ENCODE measurements at regions of chr19 and their contacts with region 1.

Region 1: DNA sequence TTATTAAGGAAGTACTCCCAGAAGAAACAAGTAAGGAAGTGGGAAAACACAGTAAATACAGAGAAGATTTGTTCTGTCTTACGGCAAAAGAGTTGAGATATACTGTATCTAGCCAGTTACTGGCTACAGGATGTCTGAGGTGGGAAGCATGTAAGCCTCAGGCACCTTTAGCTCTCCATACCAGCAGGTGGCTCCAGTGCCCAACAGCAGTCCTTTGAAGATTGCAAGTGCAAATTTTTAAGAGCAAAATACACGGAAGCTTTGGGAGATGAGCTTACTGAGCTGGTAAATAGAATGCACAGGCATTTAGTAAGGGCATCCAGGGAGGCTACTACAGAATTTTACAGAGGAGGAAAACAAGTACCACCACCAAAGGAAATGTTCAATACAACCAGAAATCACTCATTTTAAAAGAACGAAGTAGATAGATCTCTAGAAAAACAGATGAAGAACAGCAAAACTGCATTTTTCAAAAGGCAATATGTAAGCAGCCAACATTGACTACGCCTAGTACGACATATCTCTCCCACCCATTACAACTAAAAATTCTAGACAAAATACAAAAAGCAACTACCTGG is 57.9 kb upstream of the VSTM2B start:
- DNase-seq: peak; percentile 41
- ATAC-seq: peak; percentile 80
- H3K4me3 ChIP-seq: no peak overlapping the region
- H3K27ac ChIP-seq: no peak overlapping the region
- H3K4me1 ChIP-seq: no peaks in the 10 kb centered on the region
- H3K27me3 ChIP-seq: no peaks in the 10 kb centered on the region
- CTCF ChIP-seq: peak; percentile 29 to 63 (median 56); a peak in 5 of 6 replicates
- POLR2A ChIP-seq: no peak
- RAD21 ChIP-seq: peak; percentile 48

Region 2: DNA sequence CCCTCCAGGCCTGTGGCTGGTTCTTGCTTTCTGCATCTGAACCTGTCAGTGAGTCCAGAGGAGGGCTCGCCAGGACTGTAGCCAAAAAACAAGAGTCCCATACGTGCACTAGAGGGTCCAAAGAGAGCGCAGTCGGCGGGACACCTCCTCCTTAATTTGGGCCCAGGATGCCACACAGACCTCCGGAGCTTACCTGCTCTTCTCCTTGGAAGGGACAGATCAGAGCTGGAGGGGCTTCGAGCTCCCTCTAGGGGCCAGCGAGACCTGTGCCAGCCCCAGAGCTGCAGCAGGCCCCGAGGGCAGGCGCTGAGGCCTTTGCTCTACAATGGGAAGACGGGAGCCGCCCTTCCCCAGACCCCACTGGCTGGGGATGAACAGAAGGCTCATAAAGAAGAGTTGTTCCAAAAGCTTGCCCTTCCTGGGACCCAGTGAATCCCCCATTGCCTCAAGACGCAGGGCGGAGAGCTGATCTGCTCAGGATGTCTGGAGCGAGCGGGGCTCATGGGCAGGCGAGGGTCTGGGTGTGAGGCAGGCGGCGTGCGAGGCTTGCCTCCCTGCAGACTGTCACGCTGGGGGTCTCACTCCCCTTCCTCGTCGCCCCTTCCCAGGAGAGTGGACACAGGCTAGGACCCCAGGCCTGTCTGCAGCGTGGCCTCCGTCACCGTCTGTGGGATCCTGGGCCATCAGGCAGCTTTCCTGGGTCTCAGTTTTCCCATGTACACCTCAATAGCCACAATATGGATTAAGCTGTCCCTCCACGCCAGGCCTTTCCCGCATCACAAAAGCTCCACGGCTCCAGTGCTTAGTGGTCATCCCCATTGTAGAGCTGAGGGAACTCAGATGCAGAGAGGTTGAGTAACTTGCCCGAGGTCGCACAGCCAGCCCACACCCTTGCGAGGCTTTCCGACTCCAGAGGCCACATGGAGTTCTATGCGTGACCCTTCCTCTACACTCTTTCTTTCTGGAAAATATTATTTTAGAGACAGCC is 11.0 kb after region 1 on chr19:
- CTCF ChIA-PET with region 1: interaction called, 10 read pairs
- POLR2A ChIA-PET with region 1: no interaction called
- RAD21 ChIA-PET with region 1: no interaction called
- intact Hi-C with region 1: no loop called
- DNase-seq: peak; percentile 3
- ATAC-seq: peak; percentile 95
- H3K4me3 ChIP-seq: no peak overlapping the region
- H3K27ac ChIP-seq: no peak overlapping the region
- H3K4me1 ChIP-seq: no peaks in the 10 kb centered on the region
- H3K27me3 ChIP-seq: 0 out of 2 replicates have a peak, but pooled peaks cover 4% of the 10 kb centered on the region
- CTCF ChIP-seq: peak; percentile 9 to 71 (median 57); a peak in 4 of 6 replicates
- POLR2A ChIP-seq: no peak
- RAD21 ChIP-seq: peak; percentile 36; the same call in 1 of the 2 replicates

Region 3: GRCh38 chr19:29528350-29528945 is 60.5 kb after region 1 on chr19:
- CTCF ChIA-PET with region 1: interaction called, 13 read pairs
- POLR2A ChIA-PET with region 1: no interaction called
- RAD21 ChIA-PET with region 1: interaction called, 3 to 4 read pairs
- intact Hi-C with region 1: loop called (anchors 5 kb)
- DNase-seq: peak; percentile 31
- ATAC-seq: peak; percentile 97
- H3K4me3 ChIP-seq: no peak overlapping the region
- H3K27ac ChIP-seq: no peak overlapping the region
- H3K4me1 ChIP-seq: peaks cover 0 to 8% of the 10 kb centered on the region in 2 experiments; a peak in 1 of 4 replicates
- H3K27me3 ChIP-seq: peaks cover 6% of the 10 kb centered on the region; the same call in 1 of the 2 replicates
- CTCF ChIP-seq: peak; percentile 65 to 89 (median 89)
- POLR2A ChIP-seq: no peak
- RAD21 ChIP-seq: peak; percentile 76

Region 4: DNA sequence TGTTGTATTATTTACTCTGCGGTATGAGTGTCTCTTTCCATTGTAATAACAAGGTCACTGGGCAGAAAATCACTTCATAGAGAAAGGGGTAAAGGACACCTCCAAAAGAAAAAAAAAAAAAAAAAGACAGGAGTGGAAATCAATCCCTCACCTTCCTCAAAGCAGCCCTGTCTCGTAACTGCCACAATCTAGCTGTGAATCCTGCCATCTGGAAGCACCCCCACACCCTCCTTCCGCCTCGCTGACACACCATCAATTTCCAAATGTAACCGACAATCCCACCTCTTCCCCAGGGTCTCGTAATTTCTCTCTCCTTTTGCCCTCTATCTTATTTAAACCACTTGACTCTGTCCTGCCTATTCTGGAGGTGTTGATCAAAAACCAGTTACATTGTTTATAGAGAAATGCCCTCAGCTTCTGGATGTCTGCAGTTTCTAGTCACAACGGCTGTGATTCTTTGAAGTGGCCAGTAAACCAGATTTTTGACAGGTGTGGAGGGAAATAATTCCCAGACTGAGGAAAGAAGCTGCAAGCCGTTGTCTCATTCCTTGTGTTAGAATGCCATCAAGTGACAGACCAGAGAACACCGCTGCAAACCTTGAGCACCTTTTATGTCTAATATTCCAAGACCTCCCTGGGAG is 129.1 kb after region 1 on chr19:
- CTCF ChIA-PET with region 1: interaction called, 3 read pairs
- POLR2A ChIA-PET with region 1: no interaction called
- RAD21 ChIA-PET with region 1: no interaction called
- intact Hi-C with region 1: loop called (anchors 5 kb)
- DNase-seq: no peak
- ATAC-seq: no peak
- H3K4me3 ChIP-seq: no peak overlapping the region
- H3K27ac ChIP-seq: no peak overlapping the region
- H3K4me1 ChIP-seq: no peaks in the 10 kb centered on the region
- H3K27me3 ChIP-seq: peaks cover 28% of the 10 kb centered on the region
- CTCF ChIP-seq: peak in 2 of 3 experiments; percentile 23 to 31; a peak in 2 of 6 replicates
- POLR2A ChIP-seq: no peak
- RAD21 ChIP-seq: peak; percentile 45

Region 5: GRCh38 chr19:29714953-29715700 is 247.2 kb after region 1 on chr19 and contains the start of gene C19orf12:
- CTCF ChIA-PET with region 1: no interaction called
- POLR2A ChIA-PET with region 1: no interaction called
- RAD21 ChIA-PET with region 1: no interaction called
- intact Hi-C with region 1: loop called (anchors 5 kb)
- DNase-seq: no peak
- ATAC-seq: peak; percentile 81
- H3K4me3 ChIP-seq: peak within 1 kb of the TSS; percentile 80 to 96
- H3K27ac ChIP-seq: peak within 1 kb of the TSS; percentile 92
- H3K4me1 ChIP-seq: peaks cover 10% of the 10 kb centered on the region in 2 experiments
- H3K27me3 ChIP-seq: no peaks in the 10 kb centered on the region
- CTCF ChIP-seq: no peak
- POLR2A ChIP-seq: peak; percentile 45
- RAD21 ChIP-seq: no peak
- total RNA-seq, gene C19orf12: 10.0 TPM

Measured in HCT116 (cell line).